ENCODE measurements at regions of chr2 and their contacts with region 1.

Region 1: DNA sequence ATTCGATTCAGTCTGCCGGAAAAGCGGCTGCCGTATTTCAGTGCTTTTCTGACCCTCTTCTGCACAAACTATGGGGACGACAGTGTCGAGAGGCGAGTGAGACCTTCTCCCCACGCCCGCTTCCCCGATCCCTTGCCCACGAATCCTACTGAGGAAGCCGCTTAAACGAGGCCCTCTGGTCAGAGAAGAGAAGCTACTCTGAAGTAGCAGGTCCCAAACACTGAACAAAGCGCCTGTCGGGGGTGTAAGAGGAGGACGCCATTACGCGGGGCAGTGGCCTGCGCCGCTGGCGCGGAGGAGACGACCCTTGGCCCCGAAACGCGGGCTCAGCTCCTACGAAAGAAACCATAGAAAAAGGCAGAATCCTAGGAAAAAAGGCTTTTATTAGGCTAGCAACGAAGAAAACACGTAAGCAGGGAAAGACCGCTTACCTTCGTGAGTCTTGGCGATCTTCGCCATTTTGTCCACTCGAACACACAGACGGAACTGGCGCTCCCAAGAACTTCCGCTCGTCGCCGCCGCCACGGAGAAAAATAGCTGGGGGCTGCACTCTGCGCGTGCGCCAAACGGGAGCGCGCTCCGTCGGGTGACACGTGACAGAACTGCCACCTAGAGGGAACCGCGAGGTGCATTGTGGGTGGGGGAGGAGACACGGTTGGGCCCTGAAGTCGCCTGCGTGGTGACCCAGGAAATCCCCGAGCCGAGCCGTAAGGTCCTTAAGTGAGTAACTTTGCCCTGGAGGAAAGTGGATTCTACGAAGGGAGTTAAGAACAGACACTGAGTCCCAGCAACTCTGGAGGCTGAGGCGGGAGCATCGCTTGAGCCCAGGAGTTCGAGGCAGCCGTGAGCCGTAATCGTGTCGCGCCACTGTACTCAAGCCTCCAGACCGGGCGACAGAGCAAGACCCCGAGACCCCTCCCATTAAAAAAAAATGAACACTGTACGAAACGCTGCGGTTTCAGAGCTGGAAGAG is at the start of gene SF3B1:
- DNase-seq: peak; percentile 98
- H3K4me3 Mint-ChIP-seq: peak within 1 kb of the TSS; percentile 70
- H3K27ac Mint-ChIP-seq: peak within 1 kb of the TSS; percentile 100
- H3K4me1 Mint-ChIP-seq: peaks cover 15% of the 10 kb centered on the region
- H3K27me3 Mint-ChIP-seq: no peaks in the 10 kb centered on the region
- CTCF ChIP-seq: no peak
- total RNA-seq, gene SF3B1: 179 and 182 TPM in 2 replicates

Region 2: GRCh38 chr2:197423307-197423706 is 11.5 kb before region 1 on chr2:
- CTCF ChIA-PET with region 1: interaction called, 3 read pairs
- POLR2A ChIA-PET with region 1: interaction called, 34 read pairs
- intact Hi-C with region 1: no loop called
- DNase-seq: no peak
- H3K4me3 Mint-ChIP-seq: no peak overlapping the region
- H3K27ac Mint-ChIP-seq: no peak overlapping the region
- H3K4me1 Mint-ChIP-seq: peaks cover 12% of the 10 kb centered on the region
- H3K27me3 Mint-ChIP-seq: no peaks in the 10 kb centered on the region
- CTCF ChIP-seq: no peak

Region 3: DNA sequence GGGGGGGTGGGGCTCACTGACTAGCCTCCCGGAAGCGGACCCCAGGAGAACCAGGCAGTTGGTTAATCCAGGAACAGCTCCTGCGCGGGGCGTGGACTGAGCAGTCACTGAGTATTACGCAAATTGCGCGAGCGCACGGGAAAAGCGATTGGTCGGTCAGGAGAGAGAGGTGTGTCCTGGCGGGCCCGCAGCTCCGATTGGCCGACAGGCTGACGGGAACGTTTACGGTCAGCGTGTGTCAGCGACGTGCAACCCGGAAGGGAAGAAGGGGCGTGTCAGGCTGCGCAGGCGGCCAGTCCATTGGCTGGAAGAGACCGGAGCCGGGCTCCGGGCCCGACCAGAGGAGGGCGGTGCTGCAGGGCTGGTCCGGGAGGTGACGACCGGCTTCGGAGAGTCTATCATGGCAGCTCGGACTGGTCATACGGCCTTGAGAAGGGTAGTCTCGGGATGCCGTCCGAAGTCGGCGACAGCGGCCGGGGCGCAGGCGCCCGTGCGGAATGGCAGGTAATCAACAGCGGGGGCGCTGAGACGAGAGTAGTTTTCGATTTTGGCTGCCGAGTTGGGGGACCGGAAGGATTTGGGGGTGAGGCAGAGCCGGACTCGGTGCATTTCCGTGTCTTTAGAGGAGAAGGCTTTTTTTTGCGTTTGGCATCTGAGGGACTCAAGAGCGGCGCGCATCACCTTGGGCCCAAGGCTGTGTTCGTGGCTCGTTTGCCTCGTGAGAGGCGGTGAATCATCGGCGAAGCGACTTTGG is 18.5 kb after region 1 on chr2 and contains the start of gene COQ10B:
- CTCF ChIA-PET with region 1: interaction called, 6 read pairs
- POLR2A ChIA-PET with region 1: interaction called, 257 read pairs
- intact Hi-C with region 1: loop called (anchors 1 kb)
- DNase-seq: peak; percentile 99
- H3K4me3 Mint-ChIP-seq: peak within 1 kb of the TSS; percentile 99
- H3K27ac Mint-ChIP-seq: peak within 1 kb of the TSS; percentile 100
- H3K4me1 Mint-ChIP-seq: peaks cover 16% of the 10 kb centered on the region
- H3K27me3 Mint-ChIP-seq: no peaks in the 10 kb centered on the region
- CTCF ChIP-seq: no peak
- total RNA-seq, gene COQ10B: 21.3 and 22.8 TPM in 2 replicates

Region 4: DNA sequence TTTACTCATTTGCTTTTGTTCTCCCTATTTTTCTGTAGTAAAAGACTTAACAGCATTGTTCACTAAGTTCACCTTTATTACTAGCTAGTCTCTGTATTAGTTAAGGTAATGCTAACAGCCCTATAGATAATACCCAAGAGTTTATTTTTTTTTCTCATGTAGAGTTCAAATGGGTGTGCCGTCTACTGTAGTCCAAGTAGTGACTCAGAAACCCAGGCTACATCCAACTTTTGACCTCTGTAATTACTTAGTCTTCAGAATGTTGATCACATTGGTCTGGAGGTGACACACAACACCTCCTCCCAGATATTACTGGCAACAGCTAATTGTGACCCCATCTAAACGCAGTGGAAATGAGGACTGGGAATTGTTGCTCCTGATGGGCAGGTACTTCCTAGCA is 26.2 kb after region 1 on chr2:
- CTCF ChIA-PET with region 1: interaction called, 4 read pairs
- POLR2A ChIA-PET with region 1: interaction called, 257 read pairs
- intact Hi-C with region 1: no loop called
- DNase-seq: peak; percentile 39
- H3K4me3 Mint-ChIP-seq: no peak overlapping the region
- H3K27ac Mint-ChIP-seq: peak overlapping the region; percentile 59
- H3K4me1 Mint-ChIP-seq: peaks cover 18% of the 10 kb centered on the region
- H3K27me3 Mint-ChIP-seq: no peaks in the 10 kb centered on the region
- CTCF ChIP-seq: no peak

Region 5: GRCh38 chr2:197641666-197642065 is 206.8 kb after region 1 on chr2:
- CTCF ChIA-PET with region 1: no interaction called
- POLR2A ChIA-PET with region 1: no interaction called
- intact Hi-C with region 1: no loop called
- DNase-seq: no peak
- H3K4me3 Mint-ChIP-seq: no peak overlapping the region
- H3K27ac Mint-ChIP-seq: no peak overlapping the region
- H3K4me1 Mint-ChIP-seq: no peaks in the 10 kb centered on the region
- H3K27me3 Mint-ChIP-seq: no peaks in the 10 kb centered on the region
- CTCF ChIP-seq: no peak

Measured in MCF 10A (cell line).